Left colon (tissue), 2 donors: ENCODE measurements at regions of chrX and their contacts with region 1.

Region 1: DNA sequence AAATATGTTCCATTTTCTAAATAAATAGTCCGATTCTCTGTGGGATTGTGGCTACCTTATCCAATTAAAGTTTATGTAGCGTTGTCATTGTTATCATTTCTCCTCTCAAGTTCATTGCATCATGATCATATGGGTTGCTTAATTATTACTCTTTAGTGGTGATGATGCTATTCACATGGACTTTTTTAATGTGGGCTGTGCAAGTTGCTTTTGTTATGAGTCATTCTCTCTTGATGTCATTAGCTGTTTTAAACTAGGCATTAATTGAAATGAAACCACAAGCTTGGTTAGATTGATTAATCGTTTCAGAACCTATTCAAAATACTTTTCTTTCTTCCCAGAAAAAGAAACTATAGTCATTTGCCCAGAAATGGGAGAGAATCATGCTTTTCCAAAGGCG is 38.2 kb downstream of the NHS start:
- DNase-seq: no peak
- ATAC-seq: no peak

Region 2: GRCh38 chrX:17459661-17460060 is 46.4 kb after region 1 on chrX:
- intact Hi-C with region 1: loop called in 1 of 2 experiments (anchors 5 kb)
- DNase-seq: no peak
- ATAC-seq: no peak